Activated CD4-positive, alpha-beta memory T cell treated with anti-CD3 and anti-CD28 coated beads for 36 hours (primary cell): ENCODE measurements at regions of chr10 and their contacts with region 1.

Region 1: DNA sequence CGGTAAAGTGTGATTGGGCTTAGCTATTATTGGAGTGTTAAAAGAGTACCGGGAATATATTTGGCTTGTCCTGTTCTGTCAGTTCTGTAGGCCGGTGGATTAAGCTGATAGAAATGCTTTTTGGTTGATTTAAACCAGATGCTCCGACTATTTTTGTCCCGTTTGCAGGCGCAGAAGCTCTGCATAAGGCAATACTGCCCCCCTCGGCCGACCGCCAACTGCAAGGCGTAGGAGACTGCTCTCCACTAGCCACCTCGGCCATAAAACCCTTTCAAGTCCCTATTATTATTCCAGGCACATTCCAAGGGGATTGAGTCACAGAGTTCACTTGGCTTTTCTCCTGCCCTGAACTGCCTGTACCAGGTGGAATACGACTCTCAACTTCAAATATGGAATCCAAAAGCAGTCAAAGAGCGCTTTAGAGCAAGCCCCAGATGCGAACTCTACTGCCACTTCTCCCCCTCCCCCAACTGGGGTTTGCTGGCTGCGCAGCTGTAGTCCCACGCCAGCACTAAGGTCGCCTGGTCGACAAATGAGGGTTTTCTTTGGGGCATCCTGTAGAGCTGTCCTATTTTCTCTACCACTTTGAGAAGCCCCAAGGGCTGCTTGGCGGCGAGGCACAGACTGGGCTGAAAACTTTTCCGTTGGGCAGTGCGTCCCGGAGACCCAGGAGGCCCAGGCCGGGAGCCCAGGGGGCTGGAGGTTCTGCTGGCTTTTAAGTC is 108.3 kb downstream of the REEP3 start:
- DNase-seq: peak; percentile 89
- H3K4me3 Mint-ChIP-seq: peak overlapping the region; percentile 90
- H3K27ac Mint-ChIP-seq: peak overlapping the region; percentile 75
- H3K4me1 Mint-ChIP-seq: peaks cover 24% of the 10 kb centered on the region
- H3K27me3 Mint-ChIP-seq: peaks cover 2% of the 10 kb centered on the region

Region 2: DNA sequence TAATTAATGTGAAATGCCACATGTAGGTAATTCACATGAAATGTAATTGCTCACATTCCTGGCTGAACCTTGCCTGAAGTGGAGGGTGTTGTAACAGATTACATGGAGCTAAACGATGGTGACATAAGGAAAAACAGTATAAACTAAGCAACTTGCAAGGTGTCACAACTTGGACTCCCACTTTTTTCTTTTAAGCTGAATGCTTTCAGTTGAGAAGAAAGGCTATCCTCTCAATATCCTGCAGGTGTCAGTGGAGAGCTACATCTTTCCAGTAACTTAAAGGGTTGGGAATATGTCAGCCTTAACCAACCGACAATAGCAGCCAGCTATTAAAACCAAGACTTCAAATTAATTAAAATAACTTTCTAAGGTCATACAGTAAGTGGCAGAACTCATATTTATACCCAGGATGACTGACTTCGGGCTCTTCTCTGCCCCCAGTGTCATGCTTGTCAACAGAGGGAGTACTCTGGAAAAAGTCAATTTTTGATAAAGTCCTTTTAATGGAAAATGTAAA is 462.7 kb before region 1 on chr10:
- CTCF ChIA-PET with region 1: interaction called, 139 read pairs
- POLR2A ChIA-PET with region 1: no interaction called
- intact Hi-C with region 1: loop called (anchors 1 kb)
- DNase-seq: no peak
- H3K4me3 Mint-ChIP-seq: no peak overlapping the region
- H3K27ac Mint-ChIP-seq: no peak overlapping the region
- H3K4me1 Mint-ChIP-seq: peaks cover 23% of the 10 kb centered on the region
- H3K27me3 Mint-ChIP-seq: no peaks in the 10 kb centered on the region

Region 3: GRCh38 chr10:63217120-63217605 is 412.4 kb before region 1 on chr10:
- CTCF ChIA-PET with region 1: interaction called, 10 read pairs
- POLR2A ChIA-PET with region 1: no interaction called
- intact Hi-C with region 1: loop called (anchors 1 kb)
- DNase-seq: no peak
- H3K4me3 Mint-ChIP-seq: no peak overlapping the region
- H3K27ac Mint-ChIP-seq: peak overlapping the region; percentile 42
- H3K4me1 Mint-ChIP-seq: peaks cover 55% of the 10 kb centered on the region
- H3K27me3 Mint-ChIP-seq: no peaks in the 10 kb centered on the region

Region 4: DNA sequence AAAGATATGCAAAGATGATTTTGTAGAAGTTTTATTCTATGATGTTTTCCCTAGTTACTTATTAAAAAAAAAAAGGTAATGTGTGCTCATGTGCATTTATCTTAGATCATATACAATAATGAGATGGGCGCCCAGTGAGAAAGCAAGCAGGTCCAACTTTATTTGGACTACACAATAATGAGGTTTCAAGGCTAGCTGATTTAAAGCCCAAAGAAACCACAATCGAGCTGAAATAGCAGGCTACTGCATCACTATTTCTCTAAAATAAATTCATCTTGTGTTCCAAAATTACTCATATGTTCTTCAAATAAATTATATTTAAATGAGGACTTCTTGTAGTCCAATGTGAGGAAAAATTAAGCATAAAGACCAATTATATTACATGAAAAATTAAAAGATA is 273.8 kb before region 1 on chr10:
- CTCF ChIA-PET with region 1: no interaction called
- POLR2A ChIA-PET with region 1: no interaction called
- intact Hi-C with region 1: loop called (anchors 2 kb)
- DNase-seq: no peak
- H3K4me3 Mint-ChIP-seq: no peak overlapping the region
- H3K27ac Mint-ChIP-seq: no peak overlapping the region
- H3K4me1 Mint-ChIP-seq: peaks cover 25% of the 10 kb centered on the region
- H3K27me3 Mint-ChIP-seq: no peaks in the 10 kb centered on the region

Region 5: GRCh38 chr10:63521416-63522276 is 107.9 kb before region 1 on chr10:
- CTCF ChIA-PET with region 1: interaction called, 13 read pairs
- POLR2A ChIA-PET with region 1: interaction called, 6 read pairs
- intact Hi-C with region 1: loop called (anchors 1 kb)
- DNase-seq: peak; percentile 64
- H3K4me3 Mint-ChIP-seq: peak overlapping the region; percentile 87
- H3K27ac Mint-ChIP-seq: peak overlapping the region; percentile 92
- H3K4me1 Mint-ChIP-seq: peaks cover 63% of the 10 kb centered on the region
- H3K27me3 Mint-ChIP-seq: no peaks in the 10 kb centered on the region

Region 6: GRCh38 chr10:63614371-63614891 is 15.1 kb before region 1 on chr10:
- CTCF ChIA-PET with region 1: interaction called, 14 read pairs
- POLR2A ChIA-PET with region 1: no interaction called
- intact Hi-C with region 1: no loop called
- DNase-seq: no peak
- H3K4me3 Mint-ChIP-seq: no peak overlapping the region
- H3K27ac Mint-ChIP-seq: no peak overlapping the region
- H3K4me1 Mint-ChIP-seq: peaks cover 6% of the 10 kb centered on the region
- H3K27me3 Mint-ChIP-seq: no peaks in the 10 kb centered on the region

Region 7: DNA sequence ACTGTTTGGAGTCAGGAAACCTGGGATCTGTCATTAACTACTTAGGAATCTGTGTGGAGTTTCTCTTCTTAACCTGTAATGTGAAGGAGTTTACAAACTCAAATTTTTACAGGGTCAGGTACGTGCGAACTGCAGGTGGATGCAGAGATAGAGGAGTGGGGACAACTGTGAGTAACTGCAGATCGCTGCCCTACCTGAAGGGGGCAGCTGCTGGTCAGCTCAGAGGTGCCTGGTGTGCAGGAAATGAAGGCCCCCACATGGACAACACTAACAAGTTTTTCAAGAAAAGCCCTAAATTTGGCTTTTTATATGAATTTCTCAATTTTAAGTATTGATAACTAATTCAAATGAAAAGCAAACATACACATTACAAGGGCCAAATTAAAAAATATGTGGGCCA is 271.7 kb after region 1 on chr10:
- CTCF ChIA-PET with region 1: no interaction called
- POLR2A ChIA-PET with region 1: no interaction called
- intact Hi-C with region 1: no loop called
- DNase-seq: no peak
- H3K4me3 Mint-ChIP-seq: no peak overlapping the region
- H3K27ac Mint-ChIP-seq: no peak overlapping the region
- H3K4me1 Mint-ChIP-seq: no peaks in the 10 kb centered on the region
- H3K27me3 Mint-ChIP-seq: peaks cover 4% of the 10 kb centered on the region